Endothelial cell of umbilical vein (primary cell): ENCODE measurements at regions of chr10 and their contacts with region 1.

Region 1: DNA sequence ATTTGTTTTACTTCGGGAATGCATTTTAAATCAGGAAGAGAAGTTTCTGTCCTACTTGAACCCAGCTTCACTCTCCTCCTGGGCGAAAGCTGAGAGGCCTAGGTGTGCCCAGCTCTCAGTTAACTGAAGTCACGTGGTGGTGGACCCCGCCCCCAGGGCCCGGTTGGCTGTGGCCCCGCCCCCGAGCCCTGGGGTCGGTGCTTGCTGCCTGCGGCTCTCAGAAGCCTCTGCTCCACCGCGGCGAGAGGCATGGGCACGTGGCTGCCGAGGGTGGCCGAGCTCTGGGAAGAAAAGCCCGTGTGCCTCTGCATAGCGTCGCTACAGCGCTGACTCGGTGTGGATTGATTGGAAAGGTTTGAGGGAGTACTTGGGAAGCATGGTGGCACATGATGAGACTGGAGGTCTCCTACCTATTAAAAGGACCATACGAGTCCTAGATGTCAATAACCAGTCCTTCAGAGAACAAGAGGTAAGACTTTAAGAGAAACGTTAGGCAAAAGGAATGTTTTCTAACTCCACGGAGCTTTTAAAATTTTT is 34.1 kb downstream of the NET1 start:
- DNase-seq: peak; percentile 95
- H3K4me3 ChIP-seq: peak overlapping the region; percentile 47 to 89 (median 57)
- H3K27ac ChIP-seq: peak overlapping the region; percentile 50
- H3K4me1 ChIP-seq: peaks cover 35% of the 10 kb centered on the region
- H3K27me3 ChIP-seq: no peaks in the 10 kb centered on the region
- CTCF ChIP-seq: no peak
- POLR2A ChIP-seq: peak; percentile 99

Region 2: GRCh38 chr10:5404208-5405041 is 42.0 kb before region 1 on chr10 and contains the start of gene TUBAL3:
- CTCF ChIA-PET with region 1: no interaction called
- POLR2A ChIA-PET with region 1: no interaction called
- dilution Hi-C with region 1: no loop called
- intact Hi-C with region 1: no loop called
- DNase-seq: peak; percentile 52
- H3K4me3 ChIP-seq: no peak within 1 kb of the TSS
- H3K27ac ChIP-seq: no peak within 1 kb of the TSS
- H3K4me1 ChIP-seq: peaks cover 8% of the 10 kb centered on the region
- H3K27me3 ChIP-seq: peaks cover 0 to 3% of the 10 kb centered on the region in 2 experiments
- CTCF ChIP-seq: no peak
- POLR2A ChIP-seq: no peak
- total RNA-seq, gene TUBAL3: not detected in 2 replicates

Region 3: DNA sequence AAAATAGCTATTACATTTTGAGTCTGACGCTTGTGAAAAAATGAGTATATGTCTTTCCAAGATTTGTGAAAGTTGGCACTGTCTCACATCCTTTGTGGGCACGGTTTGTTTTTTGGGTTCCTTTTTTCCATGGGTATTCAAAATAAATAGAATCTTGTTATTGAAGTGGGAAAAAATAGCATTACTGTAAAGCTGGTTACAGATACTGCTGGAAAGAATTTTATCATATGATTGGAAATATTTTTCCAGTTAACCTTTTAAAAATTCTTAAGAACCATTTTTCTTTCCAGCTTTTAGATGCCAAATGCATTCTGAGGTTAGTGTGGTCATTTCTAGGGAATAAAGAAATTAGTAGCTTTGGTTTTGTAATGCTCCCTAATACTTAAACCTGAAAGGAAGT is 22.7 kb before region 1 on chr10:
- CTCF ChIA-PET with region 1: interaction called, 22 read pairs
- POLR2A ChIA-PET with region 1: interaction called, 3 read pairs
- dilution Hi-C with region 1: no loop called
- intact Hi-C with region 1: no loop called
- DNase-seq: peak; percentile 55
- H3K4me3 ChIP-seq: no peak overlapping the region
- H3K27ac ChIP-seq: no peak overlapping the region
- H3K4me1 ChIP-seq: peaks cover 14% of the 10 kb centered on the region
- H3K27me3 ChIP-seq: no peaks in the 10 kb centered on the region
- CTCF ChIP-seq: no peak
- POLR2A ChIP-seq: no peak

Region 4: DNA sequence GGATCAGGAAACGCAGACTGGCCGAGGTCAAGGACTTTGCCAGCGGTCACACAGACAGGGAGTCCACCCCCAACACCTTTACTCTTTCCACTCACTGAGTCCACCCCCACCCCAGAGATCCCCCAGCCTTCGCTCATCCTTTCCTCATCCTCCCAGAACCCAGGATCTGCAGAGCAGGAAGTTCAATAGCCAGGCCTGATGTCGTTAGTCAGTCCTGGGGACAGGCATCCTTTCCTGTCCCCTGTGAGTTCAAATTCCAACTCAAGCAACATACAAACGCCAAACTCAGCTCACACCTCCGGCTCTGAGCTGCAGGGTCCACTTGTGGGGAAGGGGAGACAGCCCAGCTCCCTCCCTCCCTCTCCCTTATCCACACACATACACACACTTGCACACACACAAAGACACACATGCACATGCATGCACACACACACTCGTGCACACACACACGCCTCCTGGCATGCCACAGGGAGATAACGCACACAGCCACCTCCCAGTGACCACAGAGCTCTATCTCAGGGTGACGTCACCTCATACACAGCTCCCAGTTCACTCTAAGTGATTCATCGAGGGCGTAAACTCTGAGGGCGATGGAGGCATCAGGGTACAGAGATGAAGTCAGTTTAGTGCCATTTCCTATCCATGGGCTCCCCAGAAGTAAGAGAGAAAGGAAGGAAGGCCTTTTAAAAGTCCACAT is 102.2 kb after region 1 on chr10:
- CTCF ChIA-PET with region 1: interaction called, 3 read pairs
- POLR2A ChIA-PET with region 1: interaction called, 14 read pairs
- dilution Hi-C with region 1: no loop called
- intact Hi-C with region 1: loop called (anchors 1 kb)
- DNase-seq: peak; percentile 89
- H3K4me3 ChIP-seq: no peak overlapping the region
- H3K27ac ChIP-seq: peak overlapping the region; percentile 93
- H3K4me1 ChIP-seq: peaks cover 48% of the 10 kb centered on the region
- H3K27me3 ChIP-seq: no peaks in the 10 kb centered on the region
- CTCF ChIP-seq: no peak
- POLR2A ChIP-seq: peak; percentile 5

Region 5: DNA sequence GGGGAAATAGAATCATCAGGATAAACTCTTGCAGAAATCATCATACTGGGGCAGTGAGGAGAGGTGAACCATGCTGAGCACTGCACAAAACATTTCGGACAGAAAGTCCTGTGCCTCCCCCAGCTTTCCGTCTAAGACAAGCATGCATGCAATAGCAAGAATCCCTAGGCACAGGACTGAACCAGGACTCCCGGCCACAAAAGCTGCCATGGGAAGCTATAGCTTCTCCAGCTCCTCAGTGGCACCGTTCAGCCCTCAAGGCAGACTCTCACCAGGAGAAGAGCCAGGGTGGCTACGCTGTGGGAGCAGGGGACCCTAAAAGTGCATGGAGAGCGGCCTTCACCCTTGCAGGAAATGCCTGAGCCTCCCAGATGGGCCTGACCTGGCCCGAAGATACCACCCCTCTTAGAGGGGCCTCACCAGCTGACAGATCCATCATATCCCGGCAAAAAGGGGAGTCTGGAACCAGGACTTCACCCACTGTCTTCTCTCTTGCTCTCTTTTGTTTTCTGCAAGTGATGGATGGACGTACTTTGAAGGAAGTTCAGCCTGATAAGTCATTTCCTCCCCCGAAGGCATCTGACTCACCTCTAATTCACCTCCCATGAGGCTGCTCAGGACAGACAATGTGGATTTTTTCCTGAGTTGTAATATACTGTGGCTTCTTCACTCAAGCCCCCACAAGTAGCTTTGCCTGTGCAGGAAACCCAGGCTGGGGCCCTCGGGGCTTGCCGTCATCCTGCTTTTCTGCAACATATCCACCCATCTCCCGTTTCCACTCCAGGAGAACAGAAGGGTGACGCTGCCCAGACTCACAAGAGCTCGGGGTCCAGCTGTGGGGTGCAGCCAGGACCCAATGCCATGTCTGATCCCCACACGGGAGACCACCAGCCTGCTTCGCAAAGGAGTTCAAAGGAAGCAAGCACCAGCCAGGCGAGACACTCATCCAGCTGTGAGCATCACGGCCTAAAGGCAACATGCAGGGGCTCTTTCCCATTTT is 149.4 kb after region 1 on chr10:
- CTCF ChIA-PET with region 1: interaction called, 4 read pairs
- POLR2A ChIA-PET with region 1: interaction called, 11 read pairs
- dilution Hi-C with region 1: no loop called
- intact Hi-C with region 1: loop called (anchors 10 kb)
- DNase-seq: peak; percentile 92
- H3K4me3 ChIP-seq: no peak overlapping the region
- H3K27ac ChIP-seq: peak overlapping the region; percentile 67
- H3K4me1 ChIP-seq: peaks cover 29% of the 10 kb centered on the region
- H3K27me3 ChIP-seq: no peaks in the 10 kb centered on the region
- CTCF ChIP-seq: no peak
- POLR2A ChIP-seq: peak; percentile 59

Region 6: GRCh38 chr10:5629303-5630111 is 183.0 kb after region 1 on chr10:
- CTCF ChIA-PET with region 1: interaction called, 309 read pairs
- POLR2A ChIA-PET with region 1: interaction called, 5 read pairs
- dilution Hi-C with region 1: no loop called
- intact Hi-C with region 1: no loop called
- DNase-seq: peak; percentile 65
- H3K4me3 ChIP-seq: no peak overlapping the region
- H3K27ac ChIP-seq: no peak overlapping the region
- H3K4me1 ChIP-seq: peaks cover 5% of the 10 kb centered on the region
- H3K27me3 ChIP-seq: peaks cover 0 to 8% of the 10 kb centered on the region in 2 experiments
- CTCF ChIP-seq: peak; percentile 85 to 86
- POLR2A ChIP-seq: no peak

Region 7: DNA sequence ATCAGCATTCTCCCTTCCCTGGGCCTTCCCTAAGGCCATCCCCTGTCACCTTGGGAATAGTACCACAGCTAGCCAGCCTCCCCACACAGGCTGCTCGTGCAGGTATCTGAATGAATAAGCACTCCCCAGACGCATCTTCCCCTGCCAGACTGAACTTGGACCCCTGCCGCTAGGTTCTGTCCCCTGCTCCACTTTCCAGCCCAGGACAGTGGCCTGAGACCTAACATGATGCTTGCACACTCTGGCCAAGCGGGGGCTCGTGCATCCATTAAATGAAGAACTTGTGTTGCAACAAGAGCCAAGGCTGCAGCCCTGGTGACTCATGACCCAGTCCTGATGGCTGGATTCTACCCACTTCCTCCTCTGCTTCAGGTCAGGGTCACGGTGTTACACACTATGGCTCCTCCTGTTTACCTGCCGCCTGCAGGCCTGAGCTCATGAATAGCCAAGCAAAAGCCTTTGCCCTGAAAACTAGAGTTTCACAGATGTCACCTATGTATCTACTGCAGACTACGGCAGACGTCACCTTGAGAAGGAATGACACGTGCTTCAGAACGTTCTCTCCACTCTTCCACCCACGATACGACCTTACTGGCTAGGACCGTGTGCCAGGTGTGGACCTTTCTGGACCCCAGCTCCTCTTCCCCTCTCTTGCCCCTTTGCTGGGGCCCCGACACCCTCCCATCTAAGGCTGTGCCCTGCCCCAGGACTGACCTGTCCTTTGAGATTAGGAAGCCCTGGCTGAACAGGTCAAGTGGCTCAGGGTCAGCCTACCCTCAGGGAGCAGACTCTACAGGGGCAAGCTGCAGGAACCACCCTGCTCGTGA is 213.5 kb after region 1 on chr10:
- CTCF ChIA-PET with region 1: no interaction called
- POLR2A ChIA-PET with region 1: no interaction called
- dilution Hi-C with region 1: no loop called
- intact Hi-C with region 1: no loop called
- DNase-seq: no peak
- H3K4me3 ChIP-seq: no peak overlapping the region
- H3K27ac ChIP-seq: no peak overlapping the region
- H3K4me1 ChIP-seq: no peaks in the 10 kb centered on the region
- H3K27me3 ChIP-seq: no peaks in the 10 kb centered on the region
- CTCF ChIP-seq: no peak
- POLR2A ChIP-seq: no peak

Region 8: GRCh38 chr10:5873515-5873995 is 427.1 kb after region 1 on chr10:
- CTCF ChIA-PET with region 1: interaction called, 7 read pairs
- POLR2A ChIA-PET with region 1: no interaction called
- dilution Hi-C with region 1: no loop called
- intact Hi-C with region 1: loop called (anchors 5 kb)
- DNase-seq: peak; percentile 85
- H3K4me3 ChIP-seq: no peak overlapping the region
- H3K27ac ChIP-seq: no peak overlapping the region
- H3K4me1 ChIP-seq: no peaks in the 10 kb centered on the region
- H3K27me3 ChIP-seq: no peaks in the 10 kb centered on the region
- CTCF ChIP-seq: peak; percentile 55 to 62
- POLR2A ChIP-seq: no peak